ENCODE measurements at regions of chr12 and their contacts with region 1.

Region 1: GRCh38 chr12:94269316-94269999 is 121.1 kb downstream of the PLXNC1 start:
- DNase-seq: no peak
- H3K4me3 Mint-ChIP-seq: peak overlapping the region; percentile 43
- H3K27ac Mint-ChIP-seq: peak overlapping the region; percentile 72
- H3K4me1 Mint-ChIP-seq: peaks cover 72% of the 10 kb centered on the region
- H3K27me3 Mint-ChIP-seq: no peaks in the 10 kb centered on the region

Region 2: DNA sequence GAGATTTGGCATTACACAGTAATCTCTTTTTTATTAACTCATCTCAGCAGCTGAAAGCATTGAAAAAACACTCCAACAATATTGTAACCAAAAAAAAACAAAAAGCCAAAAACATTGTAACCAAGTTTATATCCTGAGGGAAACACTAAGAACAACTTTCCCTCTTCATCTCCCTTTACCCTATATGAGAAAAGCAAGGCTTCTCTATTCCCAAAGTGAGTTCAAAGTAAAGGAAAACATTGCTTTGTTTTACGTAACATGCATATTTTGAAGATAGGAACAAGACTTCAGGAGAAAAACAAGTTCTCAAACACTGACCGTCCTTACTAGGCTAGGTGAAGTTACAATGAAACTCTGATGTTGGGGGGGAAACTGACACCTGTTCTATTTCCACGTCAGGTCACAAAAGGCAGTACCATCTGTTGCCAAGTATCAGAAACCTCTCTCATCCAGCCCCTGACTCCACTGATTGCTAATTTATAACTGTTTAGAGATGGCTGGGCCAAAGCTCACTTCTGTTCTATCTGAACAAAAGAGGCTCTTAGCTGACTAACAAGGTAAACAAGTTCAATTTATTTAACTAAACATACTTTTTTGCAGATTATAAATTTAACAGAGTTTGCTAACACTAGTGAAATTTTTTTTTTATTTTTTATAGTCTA is 189.0 kb before region 1 on chr12:
- intact Hi-C with region 1: no loop called
- DNase-seq: no peak
- H3K4me3 Mint-ChIP-seq: no peak overlapping the region
- H3K27ac Mint-ChIP-seq: no peak overlapping the region
- H3K4me1 Mint-ChIP-seq: peaks cover 13% of the 10 kb centered on the region
- H3K27me3 Mint-ChIP-seq: peaks cover 4% of the 10 kb centered on the region

Region 3: GRCh38 chr12:94157981-94158411 is 111.5 kb before region 1 on chr12:
- intact Hi-C with region 1: no loop called
- DNase-seq: no peak
- H3K4me3 Mint-ChIP-seq: no peak overlapping the region
- H3K27ac Mint-ChIP-seq: no peak overlapping the region
- H3K4me1 Mint-ChIP-seq: peaks cover 55% of the 10 kb centered on the region
- H3K27me3 Mint-ChIP-seq: peaks cover 2% of the 10 kb centered on the region

Region 4: GRCh38 chr12:94230357-94230905 is 39.0 kb before region 1 on chr12:
- intact Hi-C with region 1: loop called (anchors 1 kb)
- DNase-seq: no peak
- H3K4me3 Mint-ChIP-seq: peak overlapping the region; percentile 12
- H3K27ac Mint-ChIP-seq: no peak overlapping the region
- H3K4me1 Mint-ChIP-seq: peaks cover 12% of the 10 kb centered on the region
- H3K27me3 Mint-ChIP-seq: no peaks in the 10 kb centered on the region

Region 5: DNA sequence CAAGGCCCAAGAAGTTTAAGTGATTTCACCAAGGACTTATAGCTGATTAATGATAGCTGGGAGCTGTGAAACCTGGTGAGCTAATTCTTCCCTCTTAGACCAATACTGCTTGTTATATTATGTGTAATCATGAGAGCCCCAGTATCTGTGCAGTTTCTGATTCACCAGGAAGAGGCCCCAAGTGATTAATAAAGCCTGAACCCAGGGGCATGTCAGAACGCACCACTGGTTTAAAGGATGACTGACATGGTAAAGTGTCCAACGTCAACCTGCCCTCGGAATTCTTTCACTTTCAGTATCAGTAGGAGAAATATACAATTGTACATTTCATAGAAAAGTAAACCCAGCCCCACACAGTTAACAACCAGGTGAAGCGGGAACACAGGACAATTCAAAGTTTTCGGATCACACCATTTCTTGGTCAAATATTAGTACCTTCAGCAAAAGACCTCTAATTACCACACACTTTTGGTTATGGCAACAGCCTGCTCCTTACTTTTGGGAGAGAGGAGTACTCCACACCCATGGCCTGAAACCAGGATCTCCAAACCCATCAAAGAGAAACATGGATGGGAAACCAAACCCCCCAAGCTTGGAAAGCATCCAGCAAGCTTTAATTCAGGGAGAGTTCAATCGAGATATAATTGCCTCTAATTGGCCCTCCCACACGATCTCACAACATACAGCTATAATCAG is 352.4 kb after region 1 on chr12:
- intact Hi-C with region 1: loop called (anchors 1 kb)
- DNase-seq: peak; percentile 41
- H3K4me3 Mint-ChIP-seq: peak overlapping the region; percentile 63
- H3K27ac Mint-ChIP-seq: peak overlapping the region; percentile 65
- H3K4me1 Mint-ChIP-seq: peaks cover 27% of the 10 kb centered on the region
- H3K27me3 Mint-ChIP-seq: peaks cover under 1% of the 10 kb centered on the region